Right ventricle myocardium superior (tissue), 1 donor: ENCODE measurements at regions of chr15 and their contacts with region 1.

Region 1: DNA sequence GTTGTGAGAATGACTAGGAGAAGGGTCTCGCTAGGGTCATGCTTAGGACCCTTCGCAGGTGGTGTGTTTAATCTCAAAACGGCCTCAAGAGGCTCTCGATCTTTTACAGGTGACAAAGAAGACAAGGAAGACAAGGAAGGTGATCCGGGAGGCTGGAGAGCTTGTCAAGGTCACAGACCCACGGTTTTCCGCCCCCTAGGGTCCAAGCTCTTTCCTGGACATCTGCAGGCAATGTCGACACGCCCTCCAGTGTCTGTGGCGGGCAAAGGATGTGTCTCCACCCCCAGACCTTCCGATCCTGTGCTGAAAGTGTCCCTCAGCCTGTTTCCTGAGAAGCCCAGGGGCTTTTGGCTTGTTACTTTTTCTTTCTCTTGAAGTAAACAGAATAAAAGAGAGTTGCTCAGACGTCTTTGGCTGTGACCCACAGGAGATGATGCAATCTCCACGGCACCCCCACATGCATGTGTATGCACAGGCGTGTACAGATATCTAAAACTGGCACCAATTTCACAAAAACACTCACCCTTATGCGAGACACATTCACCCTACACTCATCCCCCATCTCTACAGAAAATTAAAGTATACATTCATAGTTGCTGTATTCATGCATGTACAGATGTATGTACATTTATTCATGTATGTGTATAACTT is 108.8 kb downstream of the KLF13 start:
- DNase-seq: peak; percentile 90
- ATAC-seq: peak; percentile 89

Region 2: DNA sequence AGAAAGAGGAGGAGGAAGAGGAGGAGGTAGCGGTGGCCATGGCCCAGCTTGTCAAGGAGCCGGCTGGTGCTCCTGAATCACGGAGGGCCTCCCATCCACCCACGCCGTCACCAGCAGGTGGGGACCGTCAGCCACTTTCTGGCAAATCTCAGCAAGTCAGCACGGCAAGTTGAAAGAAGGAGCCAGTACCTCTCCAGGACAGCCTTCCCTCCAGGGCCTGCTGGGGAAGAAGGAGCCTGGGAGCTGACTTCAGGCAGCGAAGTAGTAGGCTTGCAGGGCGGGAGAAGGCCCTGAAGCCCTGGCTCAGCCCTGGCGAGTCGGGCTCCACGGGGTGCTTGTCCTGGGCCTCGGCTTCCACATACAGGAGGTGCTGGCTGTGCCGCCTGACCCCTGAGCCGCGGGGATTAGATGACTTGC is 234.6 kb before region 1 on chr15:
- intact Hi-C with region 1: loop called (anchors 5 kb)
- DNase-seq: peak; percentile 88
- ATAC-seq: peak; percentile 95

Region 3: GRCh38 chr15:31236184-31237042 is 199.0 kb before region 1 on chr15:
- intact Hi-C with region 1: no loop called
- DNase-seq: peak; percentile 80
- ATAC-seq: peak; percentile 92

Region 4: DNA sequence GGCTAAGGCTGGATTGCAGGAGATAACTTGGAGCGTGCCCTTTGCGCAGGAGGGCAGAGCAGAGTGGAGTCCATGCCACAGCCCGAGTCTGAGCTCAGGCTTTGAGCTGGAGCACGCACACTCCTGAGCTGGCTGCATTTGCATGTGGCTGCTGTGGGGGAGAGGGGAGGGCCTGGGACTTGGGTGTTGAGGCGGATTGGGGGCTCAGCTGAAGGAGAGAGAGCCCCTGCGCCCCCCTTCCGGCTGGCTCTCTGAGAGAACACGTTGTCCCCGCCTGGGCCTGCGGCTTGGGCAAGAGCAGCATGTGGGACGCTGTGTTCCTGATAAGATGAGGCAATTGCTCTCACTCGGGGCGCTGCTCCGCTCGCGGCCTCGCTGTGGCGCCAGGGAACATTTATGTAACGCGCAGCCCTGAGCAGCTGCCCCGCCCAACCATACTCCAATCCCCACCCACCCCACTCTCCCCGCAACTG is 69.7 kb before region 1 on chr15:
- intact Hi-C with region 1: loop called (anchors 5 kb)
- DNase-seq: peak; percentile 98
- ATAC-seq: peak; percentile 88

Region 5: DNA sequence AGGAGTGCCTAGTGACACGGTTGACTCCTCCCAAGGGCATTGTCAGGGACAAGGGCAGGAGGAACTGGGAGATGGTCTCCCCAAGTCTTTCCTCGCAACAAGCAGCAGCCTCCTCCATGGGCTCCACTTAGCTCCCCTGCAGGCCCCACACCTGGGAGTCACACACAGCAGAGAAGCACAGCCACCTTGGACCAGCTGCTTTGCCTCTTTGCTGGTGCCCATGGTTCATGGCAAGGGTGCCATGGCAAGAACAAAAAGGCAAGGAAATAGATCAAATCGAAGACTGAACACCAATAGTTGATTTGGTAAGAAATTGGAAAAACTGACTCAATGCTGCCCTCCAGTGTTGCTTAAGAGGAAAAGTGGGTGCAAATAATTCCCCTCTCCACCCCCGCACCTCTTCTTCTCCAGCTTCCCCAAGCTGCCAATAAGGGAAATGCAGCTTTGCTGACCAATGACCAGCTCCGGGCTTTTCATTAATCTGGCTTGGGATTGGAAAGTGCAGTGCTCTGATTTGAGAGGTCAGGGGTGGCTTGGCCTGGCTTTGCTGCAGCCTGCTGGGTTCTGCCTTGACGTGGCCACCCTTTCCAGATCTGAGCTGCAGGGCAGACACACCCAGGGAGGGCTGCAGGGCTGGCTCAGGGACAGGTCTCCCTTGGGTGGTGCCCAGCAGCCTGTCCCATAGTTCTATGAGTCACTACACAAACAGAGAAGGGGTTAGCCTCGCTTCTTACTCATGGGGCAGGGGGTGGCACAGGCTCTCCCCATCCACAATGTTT is 53.2 kb after region 1 on chr15:
- intact Hi-C with region 1: loop called (anchors 5 kb)
- DNase-seq: peak; percentile 69
- ATAC-seq: peak; percentile 87